B cell (primary cell): ENCODE measurements at regions of chr2 and their contacts with region 1.

Region 1: DNA sequence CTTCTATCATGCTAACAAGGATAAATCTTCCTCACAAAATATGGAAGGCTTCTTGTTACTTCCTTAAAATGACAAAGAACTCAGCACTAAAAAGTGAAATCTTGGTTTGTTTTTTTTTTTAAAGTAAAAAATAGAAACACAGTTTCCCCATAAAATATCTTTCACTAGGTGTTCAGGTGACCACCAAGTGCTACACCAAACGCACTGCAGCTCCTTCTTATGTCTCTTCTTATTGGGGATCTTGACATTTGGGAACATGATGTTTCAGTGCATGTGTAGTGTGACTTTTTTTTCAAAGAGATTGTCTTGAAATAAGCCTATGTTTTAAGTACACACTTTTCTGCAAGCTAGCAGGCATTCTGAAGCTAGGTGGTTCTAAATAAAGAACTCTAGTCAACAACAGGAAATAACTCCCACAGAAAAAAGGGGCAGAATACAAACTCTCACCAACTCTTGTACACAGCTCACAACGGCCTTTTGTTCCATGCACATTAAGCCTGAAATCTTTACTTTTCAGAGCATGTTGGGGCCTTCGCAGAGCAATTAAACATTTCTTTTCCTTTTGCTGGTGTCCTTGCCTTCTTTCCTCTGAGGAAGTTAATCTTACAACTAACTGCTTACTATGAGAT is 13.2 kb upstream of the SERTAD2 start:
- DNase-seq: no peak
- ATAC-seq: peak; percentile 70
- H3K4me3 ChIP-seq: peak overlapping the region in 2 of 5 experiments; percentile 29 to 41
- H3K4me3 Mint-ChIP-seq: peak overlapping the region; percentile 67
- H3K27ac ChIP-seq: peak overlapping the region; percentile 66 to 81
- H3K27ac Mint-ChIP-seq: no peak overlapping the region
- H3K4me1 ChIP-seq: peaks cover 46 to 52% of the 10 kb centered on the region in 2 donors
- H3K4me1 Mint-ChIP-seq: peaks cover 46% of the 10 kb centered on the region
- H3K27me3 ChIP-seq: no peaks in the 10 kb centered on the region
- H3K27me3 Mint-ChIP-seq: no peaks in the 10 kb centered on the region
- CTCF ChIP-seq: no peak

Region 2: GRCh38 chr2:64807417-64807816 is 140.5 kb after region 1 on chr2:
- CTCF ChIA-PET with region 1: no interaction called
- POLR2A ChIA-PET with region 1: interaction called, 10 read pairs
- intact Hi-C with region 1: no loop called
- DNase-seq: no peak
- ATAC-seq: peak; percentile 28
- H3K4me3 ChIP-seq: no peak overlapping the region
- H3K4me3 Mint-ChIP-seq: no peak overlapping the region
- H3K27ac ChIP-seq: no peak overlapping the region
- H3K27ac Mint-ChIP-seq: no peak overlapping the region
- H3K4me1 ChIP-seq: peaks cover 0 to 13% of the 10 kb centered on the region in 2 donors
- H3K4me1 Mint-ChIP-seq: peaks cover 18% of the 10 kb centered on the region
- H3K27me3 ChIP-seq: no peaks in the 10 kb centered on the region
- H3K27me3 Mint-ChIP-seq: no peaks in the 10 kb centered on the region
- CTCF ChIP-seq: no peak